ENCODE measurements at regions of chr12 and their contacts with region 1.

Region 1: GRCh38 chr12:49110464-49111155 is at the start of gene LMBR1L:
- DNase-seq: peak; percentile 98
- H3K4me3 Mint-ChIP-seq: peak within 1 kb of the TSS; percentile 93
- H3K27ac Mint-ChIP-seq: peak within 1 kb of the TSS; percentile 94
- H3K4me1 Mint-ChIP-seq: peaks cover 37% of the 10 kb centered on the region
- H3K27me3 Mint-ChIP-seq: no peaks in the 10 kb centered on the region
- total RNA-seq, gene LMBR1L: 60.1 to 66.8 TPM

Region 2: DNA sequence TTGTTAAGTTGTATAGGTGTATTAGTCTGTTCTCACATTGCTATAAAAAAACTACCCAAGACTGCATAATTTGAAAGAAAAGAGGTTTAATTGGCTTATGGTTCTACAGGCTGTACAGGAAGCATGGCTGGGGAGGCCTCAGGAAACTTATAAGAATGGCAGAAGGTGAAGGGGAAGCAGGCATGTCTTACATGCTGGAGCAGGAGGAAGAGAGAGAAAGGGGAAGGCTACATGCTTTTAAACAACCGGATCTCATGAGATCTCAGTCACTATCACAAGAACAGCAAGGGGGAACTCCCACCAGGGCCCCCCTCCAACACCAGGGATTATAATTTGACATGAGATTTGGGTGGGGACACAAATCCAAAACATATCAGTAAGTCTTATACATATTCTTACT is 847.0 kb before region 1 on chr12:
- CTCF ChIA-PET with region 1: no interaction called
- intact Hi-C with region 1: no loop called
- DNase-seq: no peak
- H3K4me3 Mint-ChIP-seq: no peak overlapping the region
- H3K27ac Mint-ChIP-seq: no peak overlapping the region
- H3K4me1 Mint-ChIP-seq: peaks cover 3% of the 10 kb centered on the region
- H3K27me3 Mint-ChIP-seq: no peaks in the 10 kb centered on the region

Region 3: GRCh38 chr12:48969833-48970701 is 140.5 kb before region 1 on chr12:
- CTCF ChIA-PET with region 1: no interaction called
- intact Hi-C with region 1: no loop called
- DNase-seq: peak; percentile 48
- H3K4me3 Mint-ChIP-seq: no peak overlapping the region
- H3K27ac Mint-ChIP-seq: no peak overlapping the region
- H3K4me1 Mint-ChIP-seq: peaks cover 31% of the 10 kb centered on the region
- H3K27me3 Mint-ChIP-seq: peaks cover 42% of the 10 kb centered on the region

Region 4: GRCh38 chr12:49069507-49070346 is 40.9 kb before region 1 on chr12 and contains the start of gene RHEBL1:
- CTCF ChIA-PET with region 1: interaction called, 3 read pairs
- intact Hi-C with region 1: loop called (anchors 1 kb)
- DNase-seq: peak; percentile 100
- H3K4me3 Mint-ChIP-seq: peak within 1 kb of the TSS; percentile 99
- H3K27ac Mint-ChIP-seq: peak within 1 kb of the TSS; percentile 76
- H3K4me1 Mint-ChIP-seq: peaks cover 12% of the 10 kb centered on the region
- H3K27me3 Mint-ChIP-seq: no peaks in the 10 kb centered on the region
- total RNA-seq, gene RHEBL1: 11.8 to 15.2 TPM

Region 5: GRCh38 chr12:49130151-49131050 is 19.8 kb after region 1 on chr12:
- CTCF ChIA-PET with region 1: interaction called, 7 read pairs
- intact Hi-C with region 1: loop called (anchors 1 kb)
- DNase-seq: peak; percentile 96
- H3K4me3 Mint-ChIP-seq: peak overlapping the region; percentile 97
- H3K27ac Mint-ChIP-seq: peak overlapping the region; percentile 100
- H3K4me1 Mint-ChIP-seq: peaks cover 43% of the 10 kb centered on the region
- H3K27me3 Mint-ChIP-seq: no peaks in the 10 kb centered on the region

Measured in activated naive CD4-positive, alpha-beta T cell treated with anti-CD3 and anti-CD28 coated beads for 36 hours (primary cell).